Adrenal gland (tissue), 19 donors: ENCODE measurements at regions of chr12 and their contacts with region 1.

Region 1: GRCh38 chr12:89542912-89543592 is 17.2 kb upstream of the POC1B start:
- DNase-seq: peak; percentile 71 to 90 (median 78)
- H3K4me3 ChIP-seq: no peak overlapping the region
- H3K27ac ChIP-seq: no peak overlapping the region
- H3K4me1 ChIP-seq: peaks cover 0 to 14% of the 10 kb centered on the region in 2 donors
- H3K27me3 ChIP-seq: no peaks in the 10 kb centered on the region
- CTCF ChIP-seq: peak; percentile 79 to 91 (median 84)
- POLR2A ChIP-seq: no peak

Region 2: DNA sequence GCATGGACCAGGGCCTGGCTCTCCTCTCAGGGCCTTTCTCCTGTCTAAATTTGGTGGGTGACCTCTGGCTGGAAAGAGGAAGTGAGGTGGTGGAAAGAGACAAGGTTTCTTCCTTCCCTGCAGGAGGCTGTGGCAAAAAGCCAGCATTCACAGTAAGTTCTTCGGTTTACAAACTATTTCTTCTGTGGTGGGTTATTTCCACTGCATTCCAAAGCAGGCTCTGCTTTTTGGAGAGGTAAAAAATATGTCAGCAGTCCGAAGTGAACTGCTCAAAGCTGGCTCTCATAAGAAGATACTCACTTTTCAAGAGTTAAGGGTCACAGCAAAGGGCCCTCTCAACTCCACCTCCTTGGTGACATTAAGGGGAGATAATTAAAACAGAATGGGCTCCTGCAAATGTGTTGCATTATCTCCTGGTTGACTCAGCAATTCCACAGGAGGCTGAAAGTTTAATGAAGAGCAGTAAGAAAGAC is 31.7 kb after region 1 on chr12:
- intact Hi-C with region 1: no loop called
- DNase-seq: peak; percentile 14 to 58 (median 22)
- H3K4me3 ChIP-seq: no peak overlapping the region
- H3K27ac ChIP-seq: no peak overlapping the region
- H3K4me1 ChIP-seq: no peaks in the 10 kb centered on the region
- H3K27me3 ChIP-seq: no peaks in the 10 kb centered on the region
- CTCF ChIP-seq: no peak
- POLR2A ChIP-seq: no peak

Region 3: DNA sequence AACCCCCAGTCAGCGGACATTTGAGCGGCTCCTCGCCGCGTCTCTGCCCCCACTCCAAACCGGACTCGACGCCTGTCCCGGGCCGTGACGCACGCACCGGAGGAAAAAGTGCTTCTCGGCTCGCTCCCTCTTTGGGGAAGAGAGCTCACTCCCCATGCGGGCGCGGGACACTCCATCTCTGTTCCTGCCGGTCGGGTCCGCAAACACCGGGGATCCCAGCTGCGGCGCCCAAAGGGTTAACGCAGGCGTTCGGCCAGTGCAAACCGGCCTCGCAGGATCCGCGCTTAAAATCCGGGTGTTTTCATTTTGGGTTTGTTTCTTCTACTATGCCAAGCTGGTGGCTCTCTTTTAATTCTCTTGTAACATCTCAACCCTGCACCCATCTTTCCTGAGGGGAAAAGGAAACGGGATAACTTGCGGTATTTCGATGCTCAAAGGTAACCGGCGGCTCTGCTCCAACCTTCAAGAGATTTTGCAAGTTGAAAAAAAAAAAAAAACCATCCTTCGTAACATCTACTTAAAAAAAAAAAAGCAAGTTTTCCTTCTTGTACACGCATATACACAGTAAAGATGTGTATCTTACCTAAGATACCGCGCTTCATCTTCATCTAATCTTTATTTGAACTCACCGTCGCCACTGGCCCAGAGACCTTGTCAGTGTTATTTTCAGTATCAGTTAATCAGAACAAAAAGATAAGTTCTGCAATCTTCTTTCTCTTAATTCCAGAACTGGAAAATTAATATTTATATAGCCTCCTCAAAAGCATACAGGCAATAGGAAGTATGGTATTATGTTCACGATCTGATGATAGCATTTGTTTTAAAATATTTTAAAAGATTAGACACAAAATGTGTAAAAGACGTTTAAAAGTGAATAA is 167.2 kb after region 1 on chr12:
- intact Hi-C with region 1: loop called in 1 of 2 experiments (anchors 10 kb)
- DNase-seq: peak; percentile 53 to 80 (median 61)
- H3K4me3 ChIP-seq: peak overlapping the region in 3 of 4 donors; percentile 34 to 83 (median 67)
- H3K27ac ChIP-seq: peak overlapping the region; percentile 79 to 100 (median 98)
- H3K4me1 ChIP-seq: peaks cover 0 to 19% of the 10 kb centered on the region in 2 donors
- H3K27me3 ChIP-seq: no peaks in the 10 kb centered on the region
- CTCF ChIP-seq: no peak
- POLR2A ChIP-seq: no peak

Region 4: GRCh38 chr12:90102957-90103652 is 560.1 kb after region 1 on chr12:
- intact Hi-C with region 1: loop called in 1 of 2 experiments (anchors 10 kb)
- DNase-seq: peak in 2 of 7 donors; percentile 22 to 28
- H3K4me3 ChIP-seq: no peak overlapping the region
- H3K27ac ChIP-seq: no peak overlapping the region
- H3K4me1 ChIP-seq: no peaks in the 10 kb centered on the region
- H3K27me3 ChIP-seq: no peaks in the 10 kb centered on the region
- CTCF ChIP-seq: peak; percentile 20 to 63 (median 40)
- POLR2A ChIP-seq: no peak

Region 5: DNA sequence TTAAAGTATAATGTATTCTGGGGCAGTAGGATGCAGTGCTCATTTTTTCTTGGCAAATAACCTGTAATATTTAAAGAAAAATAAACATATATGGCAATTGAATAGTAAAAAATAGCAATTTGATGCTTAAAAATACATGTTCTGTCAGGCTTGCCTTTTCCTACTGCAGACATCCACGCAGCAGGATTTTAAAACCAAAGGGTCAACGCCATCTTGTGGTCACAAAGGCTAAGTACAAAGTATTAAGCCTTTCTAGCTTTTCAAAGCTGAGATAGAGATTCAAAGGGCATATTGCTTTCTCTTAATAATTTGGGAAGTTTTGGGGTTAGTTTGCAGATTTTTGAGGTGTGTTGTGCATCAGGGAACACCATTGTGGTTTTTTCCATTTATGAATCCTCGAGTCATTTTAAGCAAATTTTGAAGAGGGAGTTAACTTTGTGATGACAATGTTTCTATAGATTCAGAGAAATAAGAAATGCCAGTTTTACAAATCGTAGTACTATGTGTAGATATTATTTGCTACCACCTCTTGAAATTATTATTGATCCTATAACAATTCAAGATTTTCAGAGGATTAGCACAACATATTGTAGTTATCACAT is 1416.6 kb after region 1 on chr12:
- intact Hi-C with region 1: loop called in 1 of 2 experiments (anchors 10 kb)
- DNase-seq: peak in 4 of 7 donors; percentile 23 to 37 (median 29)
- H3K4me3 ChIP-seq: no peak overlapping the region
- H3K27ac ChIP-seq: no peak overlapping the region
- H3K4me1 ChIP-seq: no peaks in the 10 kb centered on the region
- H3K27me3 ChIP-seq: no peaks in the 10 kb centered on the region
- CTCF ChIP-seq: peak; percentile 44 to 66 (median 56)
- POLR2A ChIP-seq: no peak